ENCODE measurements at regions of chr2 and their contacts with region 1.

Region 1: GRCh38 chr2:94979406-94980375 is 45.8 kb upstream of the MAL start:
- DNase-seq: no peak
- H3K4me3 ChIP-seq: no peak overlapping the region
- H3K4me3 Mint-ChIP-seq: no peak overlapping the region
- H3K27ac ChIP-seq: no peak overlapping the region
- H3K27ac Mint-ChIP-seq: no peak overlapping the region
- H3K4me1 ChIP-seq: no peaks in the 10 kb centered on the region
- H3K4me1 Mint-ChIP-seq: no peaks in the 10 kb centered on the region
- H3K27me3 ChIP-seq: no peaks in the 10 kb centered on the region
- H3K27me3 Mint-ChIP-seq: peaks cover 3 to 4% (median 3%) of the 10 kb centered on the region in 3 donors
- CTCF ChIP-seq: no peak

Region 2: DNA sequence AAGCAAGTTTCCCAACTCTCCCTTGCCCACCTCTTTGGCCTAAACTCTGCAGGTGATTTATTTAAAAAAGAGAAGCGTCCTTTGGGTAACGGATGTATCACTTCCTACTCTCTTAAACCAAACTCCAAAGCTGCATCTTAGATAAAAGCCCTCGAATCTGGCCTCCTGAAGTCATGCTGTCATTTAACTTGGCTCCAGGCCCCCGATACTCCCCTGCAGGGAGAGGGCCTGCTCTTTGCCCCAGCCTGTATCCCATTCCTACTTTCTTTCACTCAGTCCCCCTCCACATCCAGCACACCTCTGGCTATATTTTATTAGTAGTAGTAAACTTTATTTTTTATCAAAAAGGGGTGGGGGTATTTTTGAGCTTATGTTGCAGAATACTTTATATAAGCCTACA is 89.5 kb before region 1 on chr2:
- intact Hi-C with region 1: no loop called
- DNase-seq: no peak
- H3K4me3 ChIP-seq: no peak overlapping the region
- H3K4me3 Mint-ChIP-seq: no peak overlapping the region
- H3K27ac ChIP-seq: no peak overlapping the region
- H3K27ac Mint-ChIP-seq: no peak overlapping the region
- H3K4me1 ChIP-seq: no peaks in the 10 kb centered on the region
- H3K4me1 Mint-ChIP-seq: no peaks in the 10 kb centered on the region
- H3K27me3 ChIP-seq: no peaks in the 10 kb centered on the region
- H3K27me3 Mint-ChIP-seq: peaks cover 0 to 7% (median 6%) of the 10 kb centered on the region in 3 donors
- CTCF ChIP-seq: no peak

Region 3: GRCh38 chr2:94939349-94939748 is 40.3 kb before region 1 on chr2:
- intact Hi-C with region 1: no loop called
- DNase-seq: no peak
- H3K4me3 ChIP-seq: no peak overlapping the region
- H3K4me3 Mint-ChIP-seq: no peak overlapping the region
- H3K27ac ChIP-seq: no peak overlapping the region
- H3K27ac Mint-ChIP-seq: no peak overlapping the region
- H3K4me1 ChIP-seq: no peaks in the 10 kb centered on the region
- H3K4me1 Mint-ChIP-seq: no peaks in the 10 kb centered on the region
- H3K27me3 ChIP-seq: no peaks in the 10 kb centered on the region
- H3K27me3 Mint-ChIP-seq: peaks cover 2 to 8% (median 7%) of the 10 kb centered on the region in 3 donors
- CTCF ChIP-seq: no peak

Region 4: GRCh38 chr2:94958243-94958642 is 21.4 kb before region 1 on chr2:
- intact Hi-C with region 1: loop called in 1 of 2 experiments (anchors 2 kb)
- DNase-seq: no peak
- H3K4me3 ChIP-seq: no peak overlapping the region
- H3K4me3 Mint-ChIP-seq: no peak overlapping the region
- H3K27ac ChIP-seq: no peak overlapping the region
- H3K27ac Mint-ChIP-seq: no peak overlapping the region
- H3K4me1 ChIP-seq: no peaks in the 10 kb centered on the region
- H3K4me1 Mint-ChIP-seq: no peaks in the 10 kb centered on the region
- H3K27me3 ChIP-seq: no peaks in the 10 kb centered on the region
- H3K27me3 Mint-ChIP-seq: peaks cover 2 to 7% (median 4%) of the 10 kb centered on the region in 3 donors
- CTCF ChIP-seq: no peak

Region 5: DNA sequence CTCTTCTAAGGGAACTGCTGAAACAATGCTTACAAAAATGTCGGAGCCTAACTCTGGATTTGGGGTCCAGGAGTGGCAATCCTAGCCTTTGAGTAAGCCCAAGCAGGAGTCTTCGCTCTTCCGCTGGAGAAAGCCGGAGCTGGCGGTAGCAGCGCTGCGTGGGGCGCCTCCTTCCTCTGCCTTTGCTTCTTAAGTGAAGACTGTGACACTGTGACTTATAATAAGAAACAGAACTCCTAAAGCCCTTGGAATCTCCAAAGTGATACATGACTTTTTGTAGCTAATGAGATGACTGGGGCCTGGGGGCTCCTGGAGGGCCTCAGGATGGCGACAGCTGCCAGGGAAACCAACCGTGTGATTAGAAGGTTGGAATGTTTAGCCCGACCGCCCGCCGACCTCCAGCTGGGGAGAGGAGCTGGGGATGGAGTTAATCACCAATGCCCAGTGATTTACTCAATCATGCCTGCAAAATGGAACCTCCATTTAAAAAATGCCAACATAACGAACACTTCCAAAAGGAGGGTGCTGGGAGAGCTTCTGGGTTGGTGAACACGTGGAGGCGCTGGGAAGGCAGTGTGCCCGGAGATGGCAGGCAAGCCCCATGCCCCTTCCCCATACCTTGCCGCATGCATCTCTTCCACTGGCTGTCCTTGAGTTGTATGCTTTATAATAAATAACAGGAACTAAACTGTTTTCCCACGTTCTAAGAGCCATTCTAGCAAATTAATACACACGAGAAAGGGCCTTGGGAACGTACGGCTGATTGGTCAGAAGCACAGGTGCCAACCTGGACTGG is 16.8 kb after region 1 on chr2:
- intact Hi-C with region 1: no loop called
- DNase-seq: no peak
- H3K4me3 ChIP-seq: no peak overlapping the region
- H3K4me3 Mint-ChIP-seq: no peak overlapping the region
- H3K27ac ChIP-seq: no peak overlapping the region
- H3K27ac Mint-ChIP-seq: no peak overlapping the region
- H3K4me1 ChIP-seq: no peaks in the 10 kb centered on the region
- H3K4me1 Mint-ChIP-seq: no peaks in the 10 kb centered on the region
- H3K27me3 ChIP-seq: peaks cover 0 to 6% of the 10 kb centered on the region in 2 donors
- H3K27me3 Mint-ChIP-seq: peaks cover 14 to 24% (median 21%) of the 10 kb centered on the region in 3 donors
- CTCF ChIP-seq: no peak

Region 6: DNA sequence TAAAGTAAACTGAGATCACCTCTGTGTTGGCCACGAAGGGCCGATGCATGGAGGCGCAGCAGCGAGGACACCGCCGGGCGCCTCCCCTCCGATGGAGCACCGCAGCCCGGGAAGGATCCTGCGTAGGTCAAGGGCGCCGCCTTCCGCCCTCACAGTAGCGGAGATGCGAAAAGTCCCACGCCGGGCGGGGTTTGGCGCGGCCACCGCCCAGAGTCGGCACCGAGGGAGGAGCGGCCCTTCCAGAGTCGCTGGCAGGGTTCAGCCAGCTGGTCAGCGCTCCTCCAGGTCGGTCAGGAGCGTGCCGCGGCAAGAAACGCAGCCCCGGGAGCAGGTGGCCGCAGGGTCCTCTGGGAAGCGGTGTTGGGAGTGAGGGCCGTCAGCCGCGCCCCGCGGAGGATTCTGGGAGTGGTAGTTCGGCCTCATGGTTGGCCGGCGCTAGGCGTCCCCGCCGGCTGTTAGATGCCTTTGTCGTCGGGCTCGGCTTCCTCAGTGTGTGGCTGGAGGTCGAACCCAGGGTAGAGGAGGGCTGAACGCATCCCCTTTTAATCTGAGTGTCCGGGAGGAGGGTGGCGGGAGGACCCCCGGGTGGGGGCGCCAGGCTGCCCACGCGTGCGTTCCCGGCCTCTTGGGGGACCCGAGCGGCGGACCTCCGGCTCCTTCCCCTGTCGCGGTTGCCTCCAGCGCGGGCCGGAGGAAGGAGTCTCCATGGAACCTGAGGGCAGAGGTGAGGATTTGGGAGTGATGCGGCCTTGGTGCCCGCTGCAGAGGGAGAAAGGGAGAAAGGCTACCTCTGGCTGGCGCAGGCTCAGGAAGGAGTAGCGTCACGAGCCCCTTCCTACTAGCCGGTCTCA is 227.6 kb after region 1 on chr2 and contains the start of gene ZNF892:
- intact Hi-C with region 1: no loop called
- DNase-seq: peak; percentile 60 to 74 (median 61)
- H3K4me3 ChIP-seq: peak within 1 kb of the TSS; percentile 61 to 84 (median 82)
- H3K4me3 Mint-ChIP-seq: peak within 1 kb of the TSS; percentile 85 to 92
- H3K27ac ChIP-seq: peak within 1 kb of the TSS; percentile 72 to 78
- H3K27ac Mint-ChIP-seq: peak within 1 kb of the TSS; percentile 29 to 89 (median 81)
- H3K4me1 ChIP-seq: peaks cover 12 to 18% of the 10 kb centered on the region in 2 donors
- H3K4me1 Mint-ChIP-seq: peaks cover 15% of the 10 kb centered on the region
- H3K27me3 ChIP-seq: no peaks in the 10 kb centered on the region
- H3K27me3 Mint-ChIP-seq: peaks cover 0 to 7% (median 1%) of the 10 kb centered on the region in 3 donors
- CTCF ChIP-seq: peak; percentile 36
- polyA plus RNA-seq, gene ZNF892: 0.15 to 0.73 (median 0.23) TPM

Measured in CD14-positive monocyte (primary cell).